GM12878 (cell line): ENCODE measurements at regions of chr13 and their contacts with region 1.

Region 1: DNA sequence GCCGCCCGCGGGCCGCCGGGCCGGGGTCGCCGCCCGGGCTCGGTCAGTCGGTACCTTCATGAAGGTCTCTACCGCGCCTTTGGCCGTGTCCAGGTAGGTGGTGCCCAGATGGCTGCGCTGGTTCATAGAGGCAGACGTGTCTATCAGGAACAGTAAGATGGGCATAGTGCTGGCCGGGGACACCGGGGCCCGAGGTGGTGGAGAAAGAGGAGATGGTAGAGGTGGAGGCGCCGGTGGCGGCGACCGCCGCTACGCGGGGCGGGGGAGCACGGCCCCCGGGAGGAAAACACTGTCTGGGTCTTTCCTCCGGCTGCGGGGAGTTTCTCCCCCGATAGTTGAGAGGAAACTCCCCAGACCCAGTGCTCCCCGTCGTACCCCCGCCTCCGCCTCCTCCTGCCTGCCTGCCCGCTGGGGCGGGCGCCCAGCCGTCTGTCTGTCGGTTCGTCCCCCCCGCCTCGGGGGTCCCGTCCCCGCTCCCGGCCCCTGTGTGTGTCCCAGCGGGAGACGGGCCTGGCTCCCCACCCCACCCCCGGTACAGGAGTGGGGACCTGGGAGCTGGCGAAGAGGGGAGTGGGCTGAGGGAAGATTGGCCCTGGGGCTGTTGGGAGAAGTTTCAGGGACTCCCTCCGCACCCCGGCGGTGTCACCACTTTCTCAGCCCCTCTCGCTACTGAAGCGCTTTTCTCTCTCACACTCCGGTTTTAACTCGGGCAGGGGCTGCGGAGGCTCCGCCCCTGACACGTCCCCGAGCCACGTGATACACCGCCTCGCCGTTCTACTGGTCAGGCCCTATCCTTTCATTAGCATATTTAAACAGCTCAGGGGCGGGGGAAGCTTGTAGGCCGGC is at the start of gene INTS6:
- DNase-seq: peak; percentile 92
- ATAC-seq: peak; percentile 84
- H3K4me3 ChIP-seq: peak within 1 kb of the TSS; percentile 97
- H3K27ac ChIP-seq: peak within 1 kb of the TSS; percentile 97
- H3K4me1 ChIP-seq: peaks cover 5% of the 10 kb centered on the region; the same call in 1 of the 2 replicates
- H3K27me3 ChIP-seq: no peaks in the 10 kb centered on the region
- CTCF ChIP-seq: no peak
- EP300 ChIP-seq: no peak
- POLR2A ChIP-seq: peak; percentile 100
- RAD21 ChIP-seq: no peak
- polyA plus RNA-seq, gene INTS6: 7.2 to 10.4 TPM

Region 2: GRCh38 chr13:51317262-51317661 is 135.3 kb before region 1 on chr13:
- CTCF ChIA-PET with region 1: no interaction called
- POLR2A ChIA-PET with region 1: no interaction called
- RAD21 ChIA-PET with region 1: no interaction called
- SMC1A ChIA-PET with region 1: no interaction called
- in situ Hi-C with region 1: no loop called
- intact Hi-C with region 1: no loop called
- DNase-seq: no peak
- ATAC-seq: no peak
- H3K4me3 ChIP-seq: no peak overlapping the region
- H3K27ac ChIP-seq: no peak overlapping the region
- H3K4me1 ChIP-seq: no peaks in the 10 kb centered on the region
- H3K27me3 ChIP-seq: no peaks in the 10 kb centered on the region
- CTCF ChIP-seq: no peak
- EP300 ChIP-seq: no peak
- POLR2A ChIP-seq: no peak
- RAD21 ChIP-seq: no peak

Region 3: DNA sequence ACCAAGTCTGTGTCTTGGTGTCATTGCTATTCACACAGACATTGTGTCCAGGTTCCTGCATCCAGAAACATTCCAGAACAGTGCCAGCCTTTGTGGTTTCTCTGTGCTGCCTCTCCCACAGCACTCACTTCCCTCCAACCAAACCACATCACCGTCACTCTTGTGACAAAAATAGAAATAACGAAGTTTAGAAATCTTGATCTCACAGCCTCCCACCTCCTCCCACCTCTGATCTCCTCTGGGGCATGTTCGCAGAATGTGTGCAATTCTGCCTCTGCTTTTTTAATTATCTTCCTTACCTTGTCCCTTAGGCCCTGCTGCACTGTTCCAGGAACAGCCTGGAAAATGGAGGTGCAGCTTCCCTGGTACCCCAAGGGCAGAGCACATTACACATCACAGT is 121.8 kb before region 1 on chr13:
- CTCF ChIA-PET with region 1: no interaction called
- POLR2A ChIA-PET with region 1: no interaction called
- RAD21 ChIA-PET with region 1: no interaction called
- SMC1A ChIA-PET with region 1: no interaction called
- in situ Hi-C with region 1: no loop called
- intact Hi-C with region 1: no loop called
- DNase-seq: peak; percentile 7
- ATAC-seq: peak; percentile 72
- H3K4me3 ChIP-seq: no peak overlapping the region
- H3K27ac ChIP-seq: no peak overlapping the region; the same call in 1 of the 2 replicates
- H3K4me1 ChIP-seq: peaks cover 18% of the 10 kb centered on the region
- H3K27me3 ChIP-seq: no peaks in the 10 kb centered on the region
- CTCF ChIP-seq: no peak
- EP300 ChIP-seq: peak; percentile 84 to 89; a peak in 3 of 4 replicates
- POLR2A ChIP-seq: no peak
- RAD21 ChIP-seq: no peak

Region 4: DNA sequence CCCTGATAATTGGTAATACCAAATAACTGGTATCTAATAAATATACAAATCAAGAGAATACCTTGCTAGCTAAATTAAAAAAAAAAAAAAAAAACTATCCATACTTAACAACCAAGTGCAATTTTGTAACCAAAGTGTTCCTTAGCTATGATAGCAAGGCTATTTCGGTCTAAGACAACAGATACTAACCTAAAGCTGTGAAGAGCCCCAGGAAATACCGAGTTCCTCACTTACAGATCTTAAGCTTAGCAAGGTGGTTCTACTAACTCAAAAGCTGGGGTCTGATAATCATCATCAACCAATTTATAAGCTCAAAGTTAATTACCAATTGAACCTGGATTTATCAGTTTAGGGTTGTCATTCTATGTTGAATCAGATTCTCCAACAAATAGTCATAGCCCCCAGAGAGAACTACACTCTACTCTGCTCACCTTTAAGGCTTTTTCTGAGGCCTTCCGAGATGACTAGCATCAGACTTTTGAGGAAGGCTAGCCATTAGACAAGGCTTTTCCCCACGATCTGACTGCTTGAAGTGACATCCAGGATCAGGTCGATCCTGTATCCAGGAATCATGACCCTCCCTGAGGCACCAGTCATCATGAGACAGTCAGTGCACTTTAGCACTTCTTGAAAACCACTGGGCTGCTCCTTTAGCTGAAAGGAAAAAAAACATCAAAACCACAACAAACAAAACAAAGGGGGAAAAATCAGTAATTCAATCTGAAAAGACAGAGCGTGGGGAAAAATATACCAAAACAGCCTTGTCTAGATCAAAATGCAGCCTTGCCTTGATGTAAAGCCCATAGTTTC is 31.7 kb before region 1 on chr13:
- CTCF ChIA-PET with region 1: interaction called, 6 read pairs
- POLR2A ChIA-PET with region 1: interaction called, 11 read pairs
- RAD21 ChIA-PET with region 1: interaction called, 17 read pairs
- SMC1A ChIA-PET with region 1: interaction called, 11 read pairs
- in situ Hi-C with region 1: no loop called
- intact Hi-C with region 1: no loop called
- DNase-seq: no peak
- ATAC-seq: 0 out of 3 replicates have a peak, but pooled peaks have one; percentile 6
- H3K4me3 ChIP-seq: no peak overlapping the region
- H3K27ac ChIP-seq: peak overlapping the region; percentile 66
- H3K4me1 ChIP-seq: peaks cover 52% of the 10 kb centered on the region
- H3K27me3 ChIP-seq: no peaks in the 10 kb centered on the region
- CTCF ChIP-seq: no peak
- EP300 ChIP-seq: no peak
- POLR2A ChIP-seq: no peak
- RAD21 ChIP-seq: no peak

Region 5: GRCh38 chr13:51502153-51502651 is 49.6 kb after region 1 on chr13:
- CTCF ChIA-PET with region 1: interaction called, 3 read pairs
- POLR2A ChIA-PET with region 1: interaction called, 5 read pairs
- RAD21 ChIA-PET with region 1: interaction called, 4 read pairs
- SMC1A ChIA-PET with region 1: interaction called, 10 read pairs
- in situ Hi-C with region 1: no loop called
- intact Hi-C with region 1: no loop called
- DNase-seq: peak; percentile 65
- ATAC-seq: peak; percentile 96
- H3K4me3 ChIP-seq: 0 out of 2 replicates have a peak overlapping the region, but pooled peaks have one; percentile 3
- H3K27ac ChIP-seq: peak overlapping the region; percentile 46; the same call in 1 of the 2 replicates
- H3K4me1 ChIP-seq: peaks cover 9% of the 10 kb centered on the region
- H3K27me3 ChIP-seq: no peaks in the 10 kb centered on the region
- CTCF ChIP-seq: no peak
- EP300 ChIP-seq: peak; percentile 72 to 78; a peak in 2 of 4 replicates
- POLR2A ChIP-seq: no peak
- RAD21 ChIP-seq: no peak

Region 6: GRCh38 chr13:51562011-51562671 is 109.6 kb after region 1 on chr13:
- CTCF ChIA-PET with region 1: no interaction called
- POLR2A ChIA-PET with region 1: interaction called, 3 read pairs
- RAD21 ChIA-PET with region 1: interaction called, 14 read pairs
- SMC1A ChIA-PET with region 1: no interaction called
- in situ Hi-C with region 1: no loop called
- intact Hi-C with region 1: loop called (anchors 5 kb)
- DNase-seq: peak; percentile 70
- ATAC-seq: peak; percentile 94
- H3K4me3 ChIP-seq: no peak overlapping the region
- H3K27ac ChIP-seq: peak overlapping the region; percentile 55
- H3K4me1 ChIP-seq: peaks cover 31% of the 10 kb centered on the region
- H3K27me3 ChIP-seq: no peaks in the 10 kb centered on the region
- CTCF ChIP-seq: no peak
- EP300 ChIP-seq: no peak
- POLR2A ChIP-seq: no peak
- RAD21 ChIP-seq: no peak

Region 7: DNA sequence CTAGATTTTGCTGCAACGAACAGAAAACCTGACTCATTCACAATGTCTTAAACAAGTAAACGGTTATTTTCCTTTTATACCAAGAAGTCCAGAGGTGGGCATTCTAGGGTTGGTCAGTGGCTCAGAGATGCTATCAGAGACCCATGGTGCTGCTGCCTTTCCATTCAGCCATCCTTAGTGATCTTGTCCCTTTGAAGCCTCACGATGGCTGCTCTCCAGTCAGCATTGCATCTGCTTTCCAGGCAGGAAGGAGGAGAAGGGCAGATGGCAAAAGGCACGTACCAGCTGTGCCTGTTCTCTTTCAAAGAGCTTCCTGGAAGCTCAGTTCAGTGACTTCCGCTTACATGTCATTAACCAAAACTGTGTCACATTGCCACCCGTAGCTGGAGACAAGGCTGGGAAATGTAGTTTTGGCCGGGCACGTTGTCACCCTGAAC is 161.8 kb after region 1 on chr13:
- CTCF ChIA-PET with region 1: no interaction called
- POLR2A ChIA-PET with region 1: interaction called, 3 read pairs
- RAD21 ChIA-PET with region 1: interaction called, 7 read pairs
- SMC1A ChIA-PET with region 1: interaction called, 18 read pairs
- in situ Hi-C with region 1: no loop called
- intact Hi-C with region 1: no loop called
- DNase-seq: peak; percentile 56
- ATAC-seq: peak; percentile 71
- H3K4me3 ChIP-seq: peak overlapping the region; percentile 53
- H3K27ac ChIP-seq: peak overlapping the region; percentile 78
- H3K4me1 ChIP-seq: peaks cover 4% of the 10 kb centered on the region
- H3K27me3 ChIP-seq: no peaks in the 10 kb centered on the region
- CTCF ChIP-seq: no peak
- EP300 ChIP-seq: no peak
- POLR2A ChIP-seq: peak; percentile 83
- RAD21 ChIP-seq: 0 out of 2 replicates have a peak, but pooled peaks have one; percentile 1

Region 8: GRCh38 chr13:51764184-51765141 is 311.9 kb after region 1 on chr13:
- CTCF ChIA-PET with region 1: interaction called, 6 read pairs
- POLR2A ChIA-PET with region 1: interaction called, 9 read pairs
- RAD21 ChIA-PET with region 1: interaction called, 17 read pairs
- SMC1A ChIA-PET with region 1: interaction called, 8 read pairs
- in situ Hi-C with region 1: no loop called
- intact Hi-C with region 1: loop called (anchors 1 kb)
- DNase-seq: peak; percentile 65
- ATAC-seq: peak; percentile 90
- H3K4me3 ChIP-seq: peak overlapping the region; percentile 49
- H3K27ac ChIP-seq: peak overlapping the region; percentile 87
- H3K4me1 ChIP-seq: peaks cover 21% of the 10 kb centered on the region
- H3K27me3 ChIP-seq: no peaks in the 10 kb centered on the region
- CTCF ChIP-seq: 0 out of 6 replicates have a peak, but pooled peaks of 1 of the 3 experiments have one; percentile 7
- EP300 ChIP-seq: no peak
- POLR2A ChIP-seq: peak; percentile 81
- RAD21 ChIP-seq: no peak